Activated CD8-positive, alpha-beta T cell treated with anti-CD3 and anti-CD28 coated beads for 36 hours (primary cell): ENCODE measurements at regions of chr7 and their contacts with region 1.

Region 1: DNA sequence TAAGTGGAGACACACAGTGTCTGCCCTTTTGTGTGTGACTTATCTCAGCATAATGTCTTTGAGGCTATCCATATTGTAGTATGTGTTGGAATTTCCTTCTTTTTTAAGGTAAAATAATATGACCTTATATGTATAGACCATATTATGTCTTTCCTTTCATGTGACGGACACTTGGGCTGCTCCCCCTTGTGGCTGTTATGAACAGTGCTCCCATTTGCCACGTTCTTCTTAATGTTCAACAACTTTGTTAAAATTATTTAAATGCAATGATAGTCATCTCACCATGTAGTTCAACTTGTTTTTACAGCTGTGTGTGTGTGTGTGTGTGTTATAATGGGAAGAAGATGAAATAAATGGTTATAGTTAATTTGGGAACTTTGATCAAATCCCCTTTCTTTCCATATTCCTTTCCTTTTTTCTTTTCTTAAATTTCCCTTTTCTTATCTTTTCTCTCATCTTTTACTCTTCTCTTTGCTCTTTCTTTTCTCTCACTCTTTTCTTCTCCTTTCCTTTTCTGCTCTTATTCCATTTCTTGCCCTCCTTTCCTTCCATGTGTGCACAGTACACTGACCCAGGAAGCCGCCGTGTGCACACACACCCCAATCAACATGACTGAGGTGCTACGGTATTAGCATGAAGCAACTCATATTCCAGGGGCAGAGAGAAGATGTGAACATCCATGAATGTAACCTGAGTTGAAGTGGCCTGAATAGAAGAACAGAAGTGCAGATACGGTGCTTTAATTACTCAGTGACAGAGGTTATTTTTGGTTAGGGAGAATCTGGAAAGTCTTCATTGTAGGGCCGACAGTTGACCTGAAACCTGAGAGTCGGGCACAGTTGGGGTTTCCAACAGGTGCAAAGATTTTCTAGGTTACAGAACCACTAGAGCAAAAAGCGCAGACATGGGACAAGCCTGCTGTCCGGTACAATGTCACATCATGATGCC is 596.7 kb downstream of the SDK1 start:
- DNase-seq: peak; percentile 68
- ATAC-seq: peak; percentile 70
- H3K4me3 Mint-ChIP-seq: no peak overlapping the region
- H3K27ac Mint-ChIP-seq: no peak overlapping the region
- H3K4me1 Mint-ChIP-seq: no peaks in the 10 kb centered on the region
- H3K27me3 Mint-ChIP-seq: peaks cover 1% of the 10 kb centered on the region
- CTCF ChIP-seq: peak; percentile 82

Region 2: GRCh38 chr7:3294432-3295100 is 603.1 kb before region 1 on chr7:
- CTCF ChIA-PET with region 1: no interaction called
- POLR2A ChIA-PET with region 1: no interaction called
- intact Hi-C with region 1: loop called (anchors 5 kb)
- DNase-seq: no peak
- ATAC-seq: no peak
- H3K4me3 Mint-ChIP-seq: no peak overlapping the region
- H3K27ac Mint-ChIP-seq: no peak overlapping the region
- H3K4me1 Mint-ChIP-seq: no peaks in the 10 kb centered on the region
- H3K27me3 Mint-ChIP-seq: peaks cover 15% of the 10 kb centered on the region
- CTCF ChIP-seq: no peak

Region 3: GRCh38 chr7:3592401-3593135 is 305.1 kb before region 1 on chr7:
- CTCF ChIA-PET with region 1: no interaction called
- POLR2A ChIA-PET with region 1: no interaction called
- intact Hi-C with region 1: no loop called
- DNase-seq: no peak
- ATAC-seq: no peak
- H3K4me3 Mint-ChIP-seq: no peak overlapping the region
- H3K27ac Mint-ChIP-seq: no peak overlapping the region
- H3K4me1 Mint-ChIP-seq: no peaks in the 10 kb centered on the region
- H3K27me3 Mint-ChIP-seq: peaks cover 1% of the 10 kb centered on the region
- CTCF ChIP-seq: no peak

Region 4: GRCh38 chr7:3691478-3692158 is 206.1 kb before region 1 on chr7:
- CTCF ChIA-PET with region 1: no interaction called
- POLR2A ChIA-PET with region 1: no interaction called
- intact Hi-C with region 1: no loop called
- DNase-seq: no peak
- ATAC-seq: no peak
- H3K4me3 Mint-ChIP-seq: no peak overlapping the region
- H3K27ac Mint-ChIP-seq: no peak overlapping the region
- H3K4me1 Mint-ChIP-seq: no peaks in the 10 kb centered on the region
- H3K27me3 Mint-ChIP-seq: no peaks in the 10 kb centered on the region
- CTCF ChIP-seq: no peak

Region 5: DNA sequence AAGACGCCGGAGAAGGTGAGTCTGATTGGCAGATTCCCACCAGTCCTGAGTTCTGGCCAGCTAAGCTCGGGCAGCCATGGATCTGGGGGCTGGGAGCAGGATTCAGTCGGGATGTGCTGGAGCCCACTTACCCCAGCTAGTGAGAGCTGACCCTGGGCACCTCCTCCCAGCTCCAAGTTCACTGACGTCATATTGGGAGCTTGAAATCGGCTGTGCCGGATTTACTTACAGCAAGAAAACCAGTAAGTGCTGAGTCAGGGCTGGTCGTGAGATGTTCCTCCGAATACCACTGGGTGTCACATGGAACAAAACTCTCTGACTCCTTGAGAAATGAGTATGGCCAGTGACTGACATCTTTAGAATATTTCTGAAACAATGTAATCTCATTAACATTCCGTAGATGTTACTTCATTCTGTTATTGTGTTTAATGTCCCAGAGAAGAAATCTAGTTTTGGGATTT is 24.5 kb after region 1 on chr7:
- CTCF ChIA-PET with region 1: no interaction called
- POLR2A ChIA-PET with region 1: no interaction called
- intact Hi-C with region 1: no loop called
- DNase-seq: peak; percentile 7
- ATAC-seq: no peak
- H3K4me3 Mint-ChIP-seq: no peak overlapping the region
- H3K27ac Mint-ChIP-seq: no peak overlapping the region
- H3K4me1 Mint-ChIP-seq: peaks cover 7% of the 10 kb centered on the region
- H3K27me3 Mint-ChIP-seq: peaks cover 13% of the 10 kb centered on the region
- CTCF ChIP-seq: no peak